Activated T-helper 2 cell treated with anti-CD3 and anti-CD28 coated beads, Interferon-gamma antibody, Interleukin-2, Interleukin-4, amounts not matched to agents 10 μg/mL and 5 μg/mL and 100 μg/mL, durations not matched to agents 14 hours and 24 hours and 36 hours (primary cell): ENCODE measurements at regions of chr18 and their contacts with region 1.

Region 1: DNA sequence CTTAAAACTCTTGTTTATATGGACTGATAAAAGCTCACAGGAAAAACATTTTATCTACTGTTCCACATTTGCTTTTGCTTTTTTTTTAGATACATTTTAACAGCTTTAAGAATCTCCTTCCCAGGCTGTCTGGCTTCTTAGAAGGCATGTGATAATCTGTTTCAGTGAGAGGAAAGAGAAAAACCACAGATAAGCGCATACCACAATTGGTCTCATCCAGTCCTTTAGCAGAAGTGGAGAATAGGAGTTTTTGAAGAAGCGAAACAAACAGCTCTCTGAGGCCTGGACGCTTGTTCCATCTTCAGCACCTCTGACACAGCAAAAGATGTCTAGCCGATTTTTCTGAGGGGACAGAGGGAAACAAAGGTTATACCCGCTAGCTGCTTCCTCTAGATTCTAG is 37.6 kb downstream of the RMC1 start:
- DNase-seq: peak; percentile 26
- H3K4me3 Mint-ChIP-seq: no peak overlapping the region
- H3K27ac Mint-ChIP-seq: peak overlapping the region; percentile 44
- H3K4me1 Mint-ChIP-seq: peaks cover 35% of the 10 kb centered on the region
- H3K27me3 Mint-ChIP-seq: no peaks in the 10 kb centered on the region

Region 2: GRCh38 chr18:23529597-23529996 is 11.3 kb before region 1 on chr18:
- intact Hi-C with region 1: loop called (anchors 1 kb)
- DNase-seq: no peak
- H3K4me3 Mint-ChIP-seq: no peak overlapping the region
- H3K27ac Mint-ChIP-seq: no peak overlapping the region
- H3K4me1 Mint-ChIP-seq: peaks cover 8% of the 10 kb centered on the region
- H3K27me3 Mint-ChIP-seq: no peaks in the 10 kb centered on the region